GM12878 (cell line): ENCODE measurements at regions of chr20 and their contacts with region 1.

Region 1: GRCh38 chr20:53660078-53660909 is 66.7 kb upstream of the ZNF217 start:
- DNase-seq: no peak
- ATAC-seq: peak; percentile 27
- H3K4me3 ChIP-seq: peak overlapping the region; percentile 63
- H3K27ac ChIP-seq: peak overlapping the region; percentile 84
- H3K4me1 ChIP-seq: peaks cover 61% of the 10 kb centered on the region
- H3K27me3 ChIP-seq: no peaks in the 10 kb centered on the region
- CTCF ChIP-seq: no peak
- EP300 ChIP-seq: no peak; a peak in 1 of 4 replicates
- POLR2A ChIP-seq: peak; percentile 41; the same call in 1 of the 2 replicates
- RAD21 ChIP-seq: 0 out of 2 replicates have a peak, but pooled peaks have one; percentile 4

Region 2: DNA sequence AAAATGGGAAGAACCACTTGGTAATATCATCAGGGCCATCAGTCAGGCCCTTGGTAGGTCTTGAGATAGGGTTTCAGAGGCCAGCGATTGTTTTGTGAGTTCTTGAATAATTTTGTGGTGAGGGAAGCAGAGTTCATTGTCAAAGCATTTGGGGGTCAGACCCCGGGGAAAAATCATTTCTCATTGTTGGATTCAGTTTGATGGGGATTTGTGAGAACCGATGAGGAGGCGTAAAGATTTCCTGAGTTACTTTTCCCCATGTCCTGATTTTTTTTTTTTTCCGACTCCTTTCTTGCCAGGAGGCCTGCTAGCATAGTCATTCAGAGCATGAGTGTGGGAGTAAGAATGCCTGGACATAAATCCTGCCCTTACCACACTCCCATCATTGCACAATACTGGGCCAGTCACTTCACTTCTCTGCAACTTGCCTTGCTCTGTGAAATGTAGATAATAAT is 627.8 kb before region 1 on chr20:
- CTCF ChIA-PET with region 1: no interaction called
- POLR2A ChIA-PET with region 1: no interaction called
- RAD21 ChIA-PET with region 1: no interaction called
- SMC1A ChIA-PET with region 1: no interaction called
- in situ Hi-C with region 1: no loop called
- intact Hi-C with region 1: no loop called
- DNase-seq: no peak
- ATAC-seq: no peak
- H3K4me3 ChIP-seq: no peak overlapping the region
- H3K27ac ChIP-seq: no peak overlapping the region
- H3K4me1 ChIP-seq: no peaks in the 10 kb centered on the region
- H3K27me3 ChIP-seq: no peaks in the 10 kb centered on the region
- CTCF ChIP-seq: no peak
- EP300 ChIP-seq: no peak
- POLR2A ChIP-seq: no peak
- RAD21 ChIP-seq: no peak

Region 3: DNA sequence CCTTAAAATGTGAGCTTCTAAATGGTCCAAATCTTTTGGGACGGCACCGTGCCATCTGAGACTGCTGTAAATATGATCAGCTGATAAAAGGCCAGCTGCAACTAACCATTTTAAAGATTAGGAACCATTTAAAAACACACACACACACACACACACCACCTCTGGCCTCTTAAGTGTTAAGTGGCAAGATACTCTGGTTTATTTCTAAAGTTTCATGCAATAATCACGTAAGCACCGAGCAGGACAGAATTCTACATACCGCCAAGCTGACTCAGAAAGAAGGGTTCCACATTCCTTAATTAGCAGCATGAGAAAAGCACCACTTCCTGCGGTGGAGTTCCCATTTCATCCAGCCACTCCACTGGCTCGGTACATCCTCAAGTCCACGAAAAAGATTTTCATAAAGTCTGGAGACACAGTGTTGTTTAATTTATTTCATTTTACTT is 48.8 kb before region 1 on chr20:
- CTCF ChIA-PET with region 1: interaction called, 3 read pairs
- POLR2A ChIA-PET with region 1: interaction called, 4 read pairs
- RAD21 ChIA-PET with region 1: interaction called, 9 read pairs
- SMC1A ChIA-PET with region 1: interaction called, 24 read pairs
- in situ Hi-C with region 1: no loop called
- intact Hi-C with region 1: no loop called
- DNase-seq: peak; percentile 82
- ATAC-seq: peak; percentile 84
- H3K4me3 ChIP-seq: peak overlapping the region; percentile 15; the same call in 1 of the 2 replicates
- H3K27ac ChIP-seq: peak overlapping the region; percentile 87
- H3K4me1 ChIP-seq: peaks cover 15% of the 10 kb centered on the region
- H3K27me3 ChIP-seq: no peaks in the 10 kb centered on the region
- CTCF ChIP-seq: no peak
- EP300 ChIP-seq: peak; percentile 71 to 80; a peak in 3 of 4 replicates
- POLR2A ChIP-seq: no peak
- RAD21 ChIP-seq: no peak

Region 4: GRCh38 chr20:53643031-53643832 is 17.1 kb before region 1 on chr20:
- CTCF ChIA-PET with region 1: interaction called, 3 read pairs
- POLR2A ChIA-PET with region 1: interaction called, 11 read pairs
- RAD21 ChIA-PET with region 1: interaction called, 16 read pairs
- SMC1A ChIA-PET with region 1: interaction called, 23 read pairs
- in situ Hi-C with region 1: no loop called
- intact Hi-C with region 1: no loop called
- DNase-seq: peak; percentile 92
- ATAC-seq: peak; percentile 99
- H3K4me3 ChIP-seq: peak overlapping the region; percentile 37
- H3K27ac ChIP-seq: peak overlapping the region; percentile 88
- H3K4me1 ChIP-seq: peaks cover 15% of the 10 kb centered on the region
- H3K27me3 ChIP-seq: no peaks in the 10 kb centered on the region
- CTCF ChIP-seq: 0 out of 6 replicates have a peak, but pooled peaks of 1 of the 3 experiments have one; percentile 7
- EP300 ChIP-seq: peak; percentile 18 to 87; a peak in 3 of 4 replicates
- POLR2A ChIP-seq: peak; percentile 83
- RAD21 ChIP-seq: 0 out of 2 replicates have a peak, but pooled peaks have one; percentile 13

Region 5: GRCh38 chr20:53684971-53685797 is 24.9 kb after region 1 on chr20:
- CTCF ChIA-PET with region 1: interaction called, 11 read pairs
- POLR2A ChIA-PET with region 1: interaction called, 16 read pairs
- RAD21 ChIA-PET with region 1: interaction called, 19 read pairs
- SMC1A ChIA-PET with region 1: interaction called, 27 read pairs
- in situ Hi-C with region 1: no loop called
- intact Hi-C with region 1: no loop called
- DNase-seq: no peak
- ATAC-seq: peak; percentile 25
- H3K4me3 ChIP-seq: no peak overlapping the region
- H3K27ac ChIP-seq: peak overlapping the region; percentile 43; the same call in 1 of the 2 replicates
- H3K4me1 ChIP-seq: peaks cover 25% of the 10 kb centered on the region
- H3K27me3 ChIP-seq: no peaks in the 10 kb centered on the region
- CTCF ChIP-seq: no peak
- EP300 ChIP-seq: no peak
- POLR2A ChIP-seq: no peak
- RAD21 ChIP-seq: no peak

Region 6: GRCh38 chr20:53778041-53778516 is 117.8 kb after region 1 on chr20:
- CTCF ChIA-PET with region 1: no interaction called
- POLR2A ChIA-PET with region 1: no interaction called
- RAD21 ChIA-PET with region 1: no interaction called
- SMC1A ChIA-PET with region 1: no interaction called
- in situ Hi-C with region 1: no loop called
- intact Hi-C with region 1: no loop called
- DNase-seq: no peak
- ATAC-seq: no peak
- H3K4me3 ChIP-seq: no peak overlapping the region
- H3K27ac ChIP-seq: no peak overlapping the region
- H3K4me1 ChIP-seq: no peaks in the 10 kb centered on the region
- H3K27me3 ChIP-seq: no peaks in the 10 kb centered on the region
- CTCF ChIP-seq: no peak
- EP300 ChIP-seq: no peak
- POLR2A ChIP-seq: no peak
- RAD21 ChIP-seq: no peak

Region 7: GRCh38 chr20:54093423-54094267 is 433.4 kb after region 1 on chr20:
- CTCF ChIA-PET with region 1: no interaction called
- POLR2A ChIA-PET with region 1: no interaction called
- RAD21 ChIA-PET with region 1: no interaction called
- SMC1A ChIA-PET with region 1: no interaction called
- in situ Hi-C with region 1: no loop called
- intact Hi-C with region 1: no loop called
- DNase-seq: no peak
- ATAC-seq: no peak
- H3K4me3 ChIP-seq: no peak overlapping the region
- H3K27ac ChIP-seq: no peak overlapping the region
- H3K4me1 ChIP-seq: peaks cover 8% of the 10 kb centered on the region
- H3K27me3 ChIP-seq: no peaks in the 10 kb centered on the region
- CTCF ChIP-seq: no peak
- EP300 ChIP-seq: no peak
- POLR2A ChIP-seq: no peak
- RAD21 ChIP-seq: no peak